GM12878 (cell line): ENCODE measurements at regions of chr20 and their contacts with region 1.

Region 1: DNA sequence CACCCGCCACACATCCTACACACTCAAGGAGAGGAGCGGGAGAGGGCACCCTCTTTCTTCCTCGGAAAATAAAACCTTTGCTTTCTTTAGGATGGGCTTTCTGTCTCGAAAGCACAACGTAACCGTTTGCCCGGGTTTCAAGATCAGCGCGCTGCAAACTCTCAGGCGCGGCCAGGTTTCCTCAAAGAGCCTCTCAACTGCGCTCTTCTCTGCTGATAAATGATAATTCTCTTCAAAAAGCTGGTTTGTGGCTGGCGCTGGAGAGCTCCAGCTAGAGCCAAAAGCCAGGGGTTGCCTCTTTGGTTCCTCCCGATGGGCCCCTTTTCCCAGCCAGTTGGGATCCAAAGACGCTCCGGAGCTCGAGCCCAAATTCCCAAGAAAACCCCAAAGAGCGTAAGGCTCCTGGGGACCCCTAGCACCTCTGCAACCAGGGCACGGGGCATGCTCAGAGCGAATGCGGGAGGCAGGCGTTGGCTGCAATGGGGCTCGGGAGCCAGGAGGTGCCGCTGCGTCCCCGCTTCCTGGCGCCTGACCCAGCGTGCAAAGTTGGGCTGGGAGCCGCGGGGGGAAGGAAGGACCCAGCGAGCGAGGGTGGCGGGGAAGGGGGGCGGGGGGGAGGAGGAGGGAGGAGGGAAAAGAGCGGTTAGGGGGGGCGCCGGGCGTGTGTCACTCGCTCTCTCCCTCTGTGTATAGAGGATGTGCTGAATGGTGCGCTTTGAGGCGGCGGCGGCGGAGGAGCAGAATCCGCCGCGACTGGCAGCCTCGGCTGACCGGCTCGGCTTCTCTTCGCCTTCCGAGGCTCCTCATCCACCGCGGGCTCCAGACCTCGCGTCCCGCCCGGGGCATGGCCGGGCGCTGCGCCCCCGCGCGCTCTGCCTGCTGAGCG is at the start of gene PLCB1:
- DNase-seq: no peak
- ATAC-seq: peak; percentile 95
- H3K4me3 ChIP-seq: peak within 1 kb of the TSS; percentile 41; the same call in 1 of the 2 replicates
- H3K27ac ChIP-seq: no peak within 1 kb of the TSS
- H3K4me1 ChIP-seq: peaks cover 10% of the 10 kb centered on the region; the same call in 1 of the 2 replicates
- H3K27me3 ChIP-seq: peaks cover 5 to 10% of the 10 kb centered on the region in 2 experiments
- CTCF ChIP-seq: peak; percentile 79 to 95 (median 93); a peak in 5 of 6 replicates
- EP300 ChIP-seq: no peak
- POLR2A ChIP-seq: no peak
- RAD21 ChIP-seq: peak; percentile 89
- polyA plus RNA-seq, gene PLCB1: 0.05 TPM in 1 of 2 experiments, not detected in the other

Region 2: DNA sequence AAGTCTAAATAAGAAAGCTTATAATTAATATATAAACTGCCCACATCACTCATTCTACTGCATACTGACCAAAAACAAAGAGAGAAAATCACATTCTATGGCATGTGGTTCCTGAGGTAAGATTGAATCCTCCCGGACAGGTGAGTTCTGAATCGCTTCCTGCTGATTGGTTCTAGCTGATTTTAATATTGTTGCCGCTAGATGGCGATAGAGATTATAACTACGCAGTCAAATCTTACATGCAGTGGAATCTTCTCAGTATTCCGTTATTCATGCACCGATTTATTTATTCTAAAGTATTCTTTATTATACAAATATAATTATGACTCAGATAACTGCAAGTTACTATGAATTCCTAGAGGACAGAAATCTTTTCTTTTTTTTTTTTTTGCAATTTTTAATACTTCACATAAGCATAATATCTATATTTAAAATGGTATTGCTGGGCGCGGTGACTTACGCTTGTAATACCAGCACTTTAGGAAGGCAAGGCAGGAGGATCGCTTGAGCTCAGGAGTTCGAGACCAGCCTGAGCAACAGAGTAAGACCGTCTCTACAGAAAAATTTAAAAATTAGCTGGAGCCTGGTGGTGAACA is 88.1 kb before region 1 on chr20:
- CTCF ChIA-PET with region 1: interaction called, 8 read pairs
- POLR2A ChIA-PET with region 1: no interaction called
- RAD21 ChIA-PET with region 1: no interaction called
- SMC1A ChIA-PET with region 1: no interaction called
- in situ Hi-C with region 1: no loop called
- intact Hi-C with region 1: loop called (anchors 2 kb)
- DNase-seq: no peak
- ATAC-seq: peak; percentile 86
- H3K4me3 ChIP-seq: no peak overlapping the region
- H3K27ac ChIP-seq: no peak overlapping the region
- H3K4me1 ChIP-seq: no peaks in the 10 kb centered on the region
- H3K27me3 ChIP-seq: no peaks in the 10 kb centered on the region
- CTCF ChIP-seq: peak; percentile 50 to 72 (median 62); a peak in 5 of 6 replicates
- EP300 ChIP-seq: no peak
- POLR2A ChIP-seq: no peak
- RAD21 ChIP-seq: peak; percentile 68

Region 3: GRCh38 chr20:8213831-8214587 is 82.2 kb after region 1 on chr20:
- CTCF ChIA-PET with region 1: interaction called, 3 read pairs
- POLR2A ChIA-PET with region 1: no interaction called
- RAD21 ChIA-PET with region 1: no interaction called
- SMC1A ChIA-PET with region 1: no interaction called
- in situ Hi-C with region 1: no loop called
- intact Hi-C with region 1: loop called (anchors 5 kb)
- DNase-seq: peak; percentile 47
- ATAC-seq: peak; percentile 88
- H3K4me3 ChIP-seq: peak overlapping the region; percentile 34; the same call in 1 of the 2 replicates
- H3K27ac ChIP-seq: peak overlapping the region; percentile 30; the same call in 1 of the 2 replicates
- H3K4me1 ChIP-seq: peaks cover 24% of the 10 kb centered on the region; the same call in 1 of the 2 replicates
- H3K27me3 ChIP-seq: no peaks in the 10 kb centered on the region
- CTCF ChIP-seq: no peak
- EP300 ChIP-seq: peak in 1 of 2 experiments; percentile 62; a peak in 1 of 4 replicates
- POLR2A ChIP-seq: no peak
- RAD21 ChIP-seq: no peak

Region 4: DNA sequence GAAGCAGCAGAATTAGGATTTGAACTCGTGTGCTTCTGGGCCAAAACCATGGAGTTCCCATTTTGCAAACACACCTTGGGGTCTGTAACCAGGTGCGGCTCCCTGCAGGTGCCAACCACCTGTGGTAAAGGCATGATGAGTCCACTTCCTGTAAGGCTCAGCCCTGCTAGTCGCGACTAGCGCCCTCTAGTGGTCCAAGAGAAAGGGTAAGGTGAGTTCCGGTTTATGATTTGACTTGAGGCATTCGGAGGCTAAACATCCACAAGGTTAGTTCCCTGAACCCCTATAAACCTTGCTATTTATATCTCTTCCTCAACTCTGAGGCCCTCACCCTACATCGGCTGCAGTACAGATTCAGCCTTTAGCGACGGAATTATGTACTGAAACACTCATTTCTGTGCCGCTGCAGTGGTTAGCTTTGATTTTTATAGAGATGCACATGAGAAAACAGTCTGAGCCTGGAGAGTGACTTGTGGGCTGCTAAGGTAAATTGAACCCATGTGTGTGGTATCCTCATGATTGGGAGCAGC is 173.7 kb after region 1 on chr20:
- CTCF ChIA-PET with region 1: interaction called, 5 read pairs
- POLR2A ChIA-PET with region 1: no interaction called
- RAD21 ChIA-PET with region 1: no interaction called
- SMC1A ChIA-PET with region 1: no interaction called
- in situ Hi-C with region 1: loop called (anchors 5 kb)
- intact Hi-C with region 1: loop called (anchors 1 kb)
- DNase-seq: peak; percentile 30
- ATAC-seq: peak; percentile 95
- H3K4me3 ChIP-seq: no peak overlapping the region
- H3K27ac ChIP-seq: no peak overlapping the region
- H3K4me1 ChIP-seq: no peaks in the 10 kb centered on the region
- H3K27me3 ChIP-seq: no peaks in the 10 kb centered on the region
- CTCF ChIP-seq: peak; percentile 65 to 80 (median 79)
- EP300 ChIP-seq: no peak
- POLR2A ChIP-seq: no peak
- RAD21 ChIP-seq: peak; percentile 60

Region 5: GRCh38 chr20:8535403-8536261 is 403.8 kb after region 1 on chr20:
- CTCF ChIA-PET with region 1: interaction called, 7 read pairs
- POLR2A ChIA-PET with region 1: no interaction called
- RAD21 ChIA-PET with region 1: no interaction called
- SMC1A ChIA-PET with region 1: interaction called, 4 read pairs
- in situ Hi-C with region 1: no loop called
- intact Hi-C with region 1: loop called (anchors 2 kb)
- DNase-seq: no peak
- ATAC-seq: peak; percentile 75
- H3K4me3 ChIP-seq: no peak overlapping the region
- H3K27ac ChIP-seq: no peak overlapping the region
- H3K4me1 ChIP-seq: no peaks in the 10 kb centered on the region
- H3K27me3 ChIP-seq: no peaks in the 10 kb centered on the region; a peak in 1 of 4 replicates
- CTCF ChIP-seq: peak; percentile 41 to 53 (median 44); a peak in 5 of 6 replicates
- EP300 ChIP-seq: no peak
- POLR2A ChIP-seq: no peak
- RAD21 ChIP-seq: peak; percentile 30; the same call in 1 of the 2 replicates